ENCODE measurements at regions of chr12 and their contacts with region 1.

Region 1: DNA sequence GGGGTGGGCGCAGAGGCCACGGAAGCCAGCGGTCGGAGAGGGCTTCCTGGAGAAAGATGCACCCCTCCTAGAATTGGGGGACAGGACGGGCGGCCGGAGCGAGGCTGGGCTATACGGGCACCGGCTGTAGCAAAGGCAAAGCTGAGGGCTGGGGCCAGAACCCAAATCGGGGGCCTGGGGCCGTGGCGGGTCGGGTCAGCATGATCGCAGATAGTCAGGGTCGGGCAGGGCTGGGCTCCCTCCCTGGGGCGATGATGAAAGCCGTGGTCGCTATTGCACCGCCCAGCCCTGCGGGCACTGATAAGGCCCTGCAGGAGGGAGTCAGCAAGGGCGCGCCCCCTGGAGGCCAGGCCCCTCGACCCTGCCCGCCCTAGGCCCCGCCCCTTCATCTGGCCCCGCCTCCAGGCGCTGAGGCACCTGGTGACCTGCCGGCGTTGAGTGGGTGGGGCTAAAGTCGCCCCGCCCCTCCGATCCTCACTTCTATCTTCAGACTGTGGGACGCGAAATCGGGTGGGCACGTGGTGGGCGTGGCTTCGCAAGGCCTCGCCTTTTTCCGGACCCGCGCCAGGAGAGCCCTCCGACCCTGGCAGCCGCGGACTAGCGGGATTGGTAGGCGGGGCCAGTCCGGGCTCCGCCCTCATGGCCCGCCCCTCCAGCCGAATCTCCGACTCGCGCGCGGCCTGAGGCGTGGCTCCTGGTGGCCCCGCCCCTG is 418 bp upstream of the SH2B3 start:
- DNase-seq: peak; percentile 100
- ATAC-seq: peak; percentile 86
- H3K4me3 Mint-ChIP-seq: peak overlapping the region; percentile 78
- H3K27ac Mint-ChIP-seq: no peak overlapping the region
- H3K4me1 Mint-ChIP-seq: peaks cover 47% of the 10 kb centered on the region
- H3K27me3 Mint-ChIP-seq: 0 out of 2 replicates have a peak, but pooled peaks cover 2% of the 10 kb centered on the region
- CTCF ChIP-seq: peak; percentile 35; the same call in 1 of the 2 replicates

Region 2: DNA sequence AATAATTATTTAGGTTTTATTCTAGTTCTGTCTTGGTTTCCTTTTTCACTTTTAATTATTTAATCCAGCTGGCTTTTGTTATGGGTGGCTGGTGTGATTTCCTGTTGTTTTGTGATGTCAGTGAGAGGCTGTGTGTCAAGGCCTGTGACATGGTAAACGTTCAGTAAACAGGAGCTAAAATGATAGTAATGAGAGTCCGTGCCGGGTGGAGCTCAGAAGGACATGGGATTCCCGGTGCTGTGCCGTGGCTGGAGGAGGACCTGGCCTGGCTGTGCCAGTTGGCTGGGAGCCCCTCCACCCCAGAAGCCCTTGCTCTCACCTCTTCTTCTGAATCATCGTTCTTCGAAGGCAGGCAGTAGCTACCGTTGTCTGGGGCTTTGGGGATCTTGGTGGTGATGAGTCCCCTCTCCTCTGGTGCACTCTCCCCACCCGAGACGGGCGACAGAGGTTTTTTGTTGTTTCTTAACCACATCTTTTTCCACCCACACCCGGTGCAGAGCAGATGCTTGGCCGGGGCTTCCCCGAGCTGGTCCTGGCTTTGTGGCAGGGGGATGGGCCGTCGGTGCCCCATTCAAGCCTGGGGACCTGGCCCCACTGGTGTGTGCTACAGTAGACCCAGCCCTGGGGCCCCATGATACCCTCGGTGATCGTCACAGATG is 29.5 kb after region 1 on chr12:
- CTCF ChIA-PET with region 1: interaction called, 25 read pairs
- POLR2A ChIA-PET with region 1: interaction called, 3 read pairs
- DNase-seq: no peak
- ATAC-seq: peak; percentile 10
- H3K4me3 Mint-ChIP-seq: peak overlapping the region; percentile 4; the same call in 1 of the 2 replicates
- H3K27ac Mint-ChIP-seq: peak overlapping the region; percentile 95
- H3K4me1 Mint-ChIP-seq: peaks cover 56% of the 10 kb centered on the region
- H3K27me3 Mint-ChIP-seq: no peaks in the 10 kb centered on the region
- CTCF ChIP-seq: no peak

Region 3: DNA sequence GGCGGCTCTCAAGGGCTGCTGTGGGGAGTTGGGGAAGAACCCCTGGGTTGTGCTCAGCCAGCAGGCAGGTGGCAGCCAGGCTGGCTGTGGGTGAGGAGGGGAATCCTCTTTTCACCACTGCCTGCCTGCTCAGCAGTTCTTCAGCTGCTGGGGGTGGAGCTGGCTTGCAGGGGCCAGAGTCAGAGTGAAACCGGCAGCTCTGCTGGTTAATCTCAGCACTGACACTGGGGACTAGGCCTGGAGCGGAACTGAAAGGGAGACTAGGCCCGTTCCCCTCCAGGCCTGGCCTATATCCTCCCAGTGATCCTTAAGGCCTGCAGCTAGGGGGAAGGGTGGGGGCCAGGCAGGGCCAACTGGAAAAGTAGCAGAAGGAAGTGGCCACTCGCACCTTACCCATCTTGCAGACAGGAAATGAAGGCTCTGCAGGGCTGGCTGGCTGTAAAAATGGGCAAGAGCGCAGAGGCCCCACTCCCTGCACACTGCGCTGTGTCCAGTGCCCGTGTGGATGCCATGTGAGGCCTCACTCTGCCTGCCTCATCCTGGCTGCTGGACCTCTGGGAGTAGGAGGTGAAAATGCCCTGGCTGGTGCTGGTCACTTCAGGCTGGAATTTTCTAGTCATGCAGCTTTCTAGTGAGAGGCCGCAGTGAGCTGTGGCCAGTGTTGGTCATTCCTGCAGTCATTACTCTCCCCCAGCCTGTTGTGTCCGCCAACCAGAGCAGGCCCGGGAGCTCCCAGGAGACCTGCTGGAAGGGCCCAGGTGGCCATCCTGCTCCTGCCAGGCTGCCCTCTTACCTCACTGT is 39.8 kb after region 1 on chr12:
- CTCF ChIA-PET with region 1: interaction called, 116 read pairs
- POLR2A ChIA-PET with region 1: interaction called, 3 read pairs
- DNase-seq: no peak
- ATAC-seq: peak; percentile 25
- H3K4me3 Mint-ChIP-seq: no peak overlapping the region
- H3K27ac Mint-ChIP-seq: peak overlapping the region; percentile 94
- H3K4me1 Mint-ChIP-seq: peaks cover 22% of the 10 kb centered on the region
- H3K27me3 Mint-ChIP-seq: no peaks in the 10 kb centered on the region
- CTCF ChIP-seq: no peak

Region 4: GRCh38 chr12:111467092-111467856 is 62.0 kb after region 1 on chr12:
- CTCF ChIA-PET with region 1: no interaction called
- POLR2A ChIA-PET with region 1: no interaction called
- DNase-seq: no peak
- ATAC-seq: no peak
- H3K4me3 Mint-ChIP-seq: no peak overlapping the region
- H3K27ac Mint-ChIP-seq: peak overlapping the region; percentile 39
- H3K4me1 Mint-ChIP-seq: no peaks in the 10 kb centered on the region
- H3K27me3 Mint-ChIP-seq: no peaks in the 10 kb centered on the region
- CTCF ChIP-seq: no peak

Region 5: GRCh38 chr12:111650912-111651311 is 245.6 kb after region 1 on chr12:
- CTCF ChIA-PET with region 1: no interaction called
- POLR2A ChIA-PET with region 1: no interaction called
- DNase-seq: no peak
- ATAC-seq: no peak
- H3K4me3 Mint-ChIP-seq: no peak overlapping the region
- H3K27ac Mint-ChIP-seq: no peak overlapping the region
- H3K4me1 Mint-ChIP-seq: no peaks in the 10 kb centered on the region
- H3K27me3 Mint-ChIP-seq: no peaks in the 10 kb centered on the region
- CTCF ChIP-seq: no peak